ENCODE measurements at regions of chr1 and their contacts with region 1.

Region 1: GRCh38 chr1:241847796-241848685 is at the start of gene EXO1:
- DNase-seq: peak; percentile 85 to 86 (median 85)
- H3K4me3 ChIP-seq: peak within 1 kb of the TSS; percentile 76 to 94 (median 79)
- H3K4me3 Mint-ChIP-seq: peak within 1 kb of the TSS; percentile 94 to 97
- H3K27ac ChIP-seq: peak within 1 kb of the TSS; percentile 90 to 97
- H3K27ac Mint-ChIP-seq: peak within 1 kb of the TSS; percentile 98 to 100 (median 100)
- H3K4me1 ChIP-seq: peaks cover 15 to 19% of the 10 kb centered on the region in 2 donors
- H3K4me1 Mint-ChIP-seq: peaks cover 17% of the 10 kb centered on the region
- H3K27me3 ChIP-seq: no peaks in the 10 kb centered on the region
- H3K27me3 Mint-ChIP-seq: peaks cover 0 to 6% (median 0%) of the 10 kb centered on the region in 3 donors
- CTCF ChIP-seq: no peak
- polyA plus RNA-seq, gene EXO1: 0.16 to 0.26 TPM in 2 of 3 donors, not detected in the other

Region 2: GRCh38 chr1:241611063-241611462 is 237.0 kb before region 1 on chr1:
- intact Hi-C with region 1: loop called in 1 of 2 experiments (anchors 10 kb)
- DNase-seq: peak; percentile 43 to 74 (median 66)
- H3K4me3 ChIP-seq: no peak overlapping the region
- H3K4me3 Mint-ChIP-seq: no peak overlapping the region
- H3K27ac ChIP-seq: peak overlapping the region in 1 of 2 donors; percentile 60
- H3K27ac Mint-ChIP-seq: no peak overlapping the region
- H3K4me1 ChIP-seq: peaks cover 11 to 20% of the 10 kb centered on the region in 2 donors
- H3K4me1 Mint-ChIP-seq: peaks cover 14% of the 10 kb centered on the region
- H3K27me3 ChIP-seq: no peaks in the 10 kb centered on the region
- H3K27me3 Mint-ChIP-seq: peaks cover 0 to 3% (median 0%) of the 10 kb centered on the region in 3 donors
- CTCF ChIP-seq: peak; percentile 80

Region 3: DNA sequence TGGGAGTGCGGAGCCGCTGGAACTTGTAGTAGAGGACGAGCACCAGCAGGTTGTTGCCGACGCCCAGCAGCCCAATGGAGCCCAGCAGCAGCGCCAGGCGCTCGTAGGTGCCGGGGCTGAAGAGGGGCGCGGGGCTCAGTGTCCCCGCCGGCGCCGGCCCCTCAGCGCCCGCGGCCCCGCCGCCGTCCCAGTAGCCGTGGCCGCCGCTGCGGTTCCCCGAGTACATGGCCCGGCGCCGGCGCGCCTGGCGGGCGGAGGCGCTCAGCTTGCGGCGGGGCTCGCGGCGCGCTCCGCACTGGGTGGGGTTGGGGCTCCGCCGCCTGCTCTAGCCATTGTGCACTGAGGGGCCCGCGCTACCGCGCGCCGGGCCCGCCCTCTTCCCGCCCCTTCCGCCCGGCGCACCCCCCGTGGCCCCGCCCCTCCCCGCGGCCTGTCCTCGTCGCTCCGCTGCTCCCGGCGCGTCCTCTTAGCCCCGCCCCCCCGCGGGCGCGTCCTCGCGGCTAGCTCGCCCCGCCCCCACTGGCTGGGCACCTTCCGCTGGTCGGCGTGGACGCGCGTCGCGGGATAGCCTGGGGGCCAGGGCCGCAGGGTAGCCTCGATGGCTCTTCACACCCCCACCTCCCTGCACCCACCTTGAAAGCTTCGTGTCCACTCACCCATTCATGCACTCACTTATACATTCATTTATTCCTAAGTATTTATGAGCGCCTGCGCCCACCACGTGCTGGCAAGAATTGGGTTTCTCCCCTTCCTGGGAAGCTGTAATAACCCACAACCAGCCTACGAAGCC is 207.8 kb before region 1 on chr1 and contains the starts of genes CHML and OPN3:
- intact Hi-C with region 1: loop called (anchors 10 kb)
- DNase-seq: peak; percentile 86 to 90 (median 89)
- H3K4me3 ChIP-seq: peak within 1 kb of the TSS; percentile 81 to 92 (median 88)
- H3K4me3 Mint-ChIP-seq: peak within 1 kb of the TSS; percentile 84 to 92
- H3K27ac ChIP-seq: peak within 1 kb of the TSS; percentile 74 to 90
- H3K27ac Mint-ChIP-seq: peak within 1 kb of the TSS; percentile 81 to 96 (median 87)
- H3K4me1 ChIP-seq: peaks cover 34 to 49% of the 10 kb centered on the region in 2 donors
- H3K4me1 Mint-ChIP-seq: peaks cover 42% of the 10 kb centered on the region
- H3K27me3 ChIP-seq: no peaks in the 10 kb centered on the region
- H3K27me3 Mint-ChIP-seq: peaks cover 0 to 2% (median 2%) of the 10 kb centered on the region in 3 donors
- CTCF ChIP-seq: no peak
- polyA plus RNA-seq, gene CHML: 3.4 to 6.6 (median 3.4) TPM
- polyA plus RNA-seq, gene OPN3: 14.5 to 56.1 (median 55.2) TPM

Region 4: GRCh38 chr1:241810769-241811405 is 37.2 kb before region 1 on chr1:
- intact Hi-C with region 1: no loop called
- DNase-seq: peak; percentile 60 to 74 (median 64)
- H3K4me3 ChIP-seq: no peak overlapping the region
- H3K4me3 Mint-ChIP-seq: no peak overlapping the region
- H3K27ac ChIP-seq: peak overlapping the region; percentile 67 to 80
- H3K27ac Mint-ChIP-seq: peak overlapping the region; percentile 77 to 95 (median 91)
- H3K4me1 ChIP-seq: peaks cover 43 to 64% of the 10 kb centered on the region in 2 donors
- H3K4me1 Mint-ChIP-seq: peaks cover 55% of the 10 kb centered on the region
- H3K27me3 ChIP-seq: no peaks in the 10 kb centered on the region
- H3K27me3 Mint-ChIP-seq: no peaks in the 10 kb centered on the region
- CTCF ChIP-seq: no peak

Region 5: DNA sequence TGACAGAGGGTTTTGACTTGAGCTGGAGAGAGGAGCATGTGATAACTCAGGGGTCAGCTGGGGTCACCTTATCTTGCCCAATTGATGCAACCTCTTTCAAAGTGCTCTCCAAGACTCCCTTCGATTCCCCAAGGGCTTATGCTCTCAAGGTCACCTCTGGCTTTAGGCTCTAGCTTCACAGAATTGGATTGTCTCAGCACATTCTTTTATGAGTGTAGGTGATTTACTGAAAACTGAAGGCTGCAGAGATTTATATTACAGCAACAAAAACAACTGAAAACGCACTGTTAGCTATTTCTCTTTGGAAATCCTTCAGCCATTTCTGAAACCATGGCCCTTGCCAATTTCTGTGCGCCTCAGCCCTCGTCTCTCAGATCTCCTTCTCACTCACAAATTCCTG is 185.4 kb after region 1 on chr1:
- intact Hi-C with region 1: no loop called
- DNase-seq: no peak
- H3K4me3 ChIP-seq: no peak overlapping the region
- H3K4me3 Mint-ChIP-seq: no peak overlapping the region
- H3K27ac ChIP-seq: no peak overlapping the region
- H3K27ac Mint-ChIP-seq: no peak overlapping the region
- H3K4me1 ChIP-seq: no peaks in the 10 kb centered on the region
- H3K4me1 Mint-ChIP-seq: no peaks in the 10 kb centered on the region
- H3K27me3 ChIP-seq: no peaks in the 10 kb centered on the region
- H3K27me3 Mint-ChIP-seq: peaks cover 3 to 6% (median 4%) of the 10 kb centered on the region in 3 donors
- CTCF ChIP-seq: no peak

Region 6: GRCh38 chr1:242585616-242586359 is 737.7 kb after region 1 on chr1:
- intact Hi-C with region 1: no loop called
- DNase-seq: no peak
- H3K4me3 ChIP-seq: no peak overlapping the region
- H3K4me3 Mint-ChIP-seq: no peak overlapping the region
- H3K27ac ChIP-seq: no peak overlapping the region
- H3K27ac Mint-ChIP-seq: peak overlapping the region in 1 of 7 donors; percentile 44
- H3K4me1 ChIP-seq: no peaks in the 10 kb centered on the region
- H3K4me1 Mint-ChIP-seq: no peaks in the 10 kb centered on the region
- H3K27me3 ChIP-seq: no peaks in the 10 kb centered on the region
- H3K27me3 Mint-ChIP-seq: no peaks in the 10 kb centered on the region
- CTCF ChIP-seq: no peak